Mammary epithelial cell (primary cell): ENCODE measurements at regions of chr3 and their contacts with region 1.

Region 1: GRCh38 chr3:49469936-49470713 is at the start of gene DAG1:
- DNase-seq: peak; percentile 97
- H3K4me3 ChIP-seq: peak within 1 kb of the TSS; percentile 62 to 98 (median 86)
- H3K27ac ChIP-seq: peak within 1 kb of the TSS; percentile 81
- H3K4me1 ChIP-seq: peaks cover 29% of the 10 kb centered on the region
- H3K27me3 ChIP-seq: no peaks in the 10 kb centered on the region
- CTCF ChIP-seq: no peak
- total RNA-seq, gene DAG1: 68.9 to 162 TPM

Region 2: GRCh38 chr3:49428697-49429100 is 41.4 kb before region 1 on chr3:
- CTCF ChIA-PET with region 1: no interaction called
- dilution Hi-C with region 1: loop called (anchors 5 kb)
- in situ Hi-C with region 1: no loop called
- intact Hi-C with region 1: no loop called
- DNase-seq: no peak
- H3K4me3 ChIP-seq: peak overlapping the region; percentile 74 to 79 (median 76)
- H3K27ac ChIP-seq: no peak overlapping the region
- H3K4me1 ChIP-seq: peaks cover 6% of the 10 kb centered on the region
- H3K27me3 ChIP-seq: no peaks in the 10 kb centered on the region
- CTCF ChIP-seq: no peak

Region 3: GRCh38 chr3:49500732-49501609 is 30.8 kb after region 1 on chr3:
- CTCF ChIA-PET with region 1: no interaction called
- dilution Hi-C with region 1: no loop called
- in situ Hi-C with region 1: no loop called
- intact Hi-C with region 1: loop called (anchors 2 kb)
- DNase-seq: peak; percentile 95
- H3K4me3 ChIP-seq: peak overlapping the region in 1 of 3 experiments; percentile 6
- H3K27ac ChIP-seq: peak overlapping the region; percentile 82
- H3K4me1 ChIP-seq: peaks cover 29% of the 10 kb centered on the region
- H3K27me3 ChIP-seq: no peaks in the 10 kb centered on the region
- CTCF ChIP-seq: no peak

Region 4: DNA sequence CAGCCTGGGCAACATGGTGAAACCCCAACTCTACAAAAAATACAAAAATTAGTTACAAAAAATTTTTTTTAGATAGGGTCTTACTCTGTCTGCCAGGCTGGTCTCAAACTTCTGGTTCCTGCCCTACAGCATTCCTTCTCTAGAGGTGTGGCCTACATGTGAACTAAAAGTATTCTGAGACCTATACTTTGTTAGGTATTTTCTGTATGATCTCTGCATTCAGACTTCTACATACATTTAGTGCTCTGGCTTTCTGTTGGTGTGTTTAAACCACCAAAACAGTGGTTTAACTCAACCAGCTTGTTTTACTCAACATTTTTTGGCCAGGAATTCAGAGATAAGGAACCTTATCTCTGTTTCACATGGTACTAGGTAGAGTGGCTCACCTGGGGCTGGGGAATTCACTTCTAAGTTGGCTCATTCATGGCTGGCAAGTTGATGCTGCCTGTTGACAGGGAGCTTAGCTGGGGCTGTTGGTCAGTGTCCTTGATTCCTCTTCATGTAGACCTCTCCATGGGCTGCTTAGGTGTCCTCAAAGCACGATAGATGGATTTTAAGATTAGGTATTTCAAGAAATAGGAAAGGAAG is 42.7 kb after region 1 on chr3:
- CTCF ChIA-PET with region 1: no interaction called
- dilution Hi-C with region 1: loop called (anchors 5 kb)
- in situ Hi-C with region 1: no loop called
- intact Hi-C with region 1: no loop called
- DNase-seq: no peak
- H3K4me3 ChIP-seq: no peak overlapping the region
- H3K27ac ChIP-seq: no peak overlapping the region
- H3K4me1 ChIP-seq: no peaks in the 10 kb centered on the region
- H3K27me3 ChIP-seq: no peaks in the 10 kb centered on the region
- CTCF ChIP-seq: no peak

Region 5: GRCh38 chr3:49519296-49519695 is 49.2 kb after region 1 on chr3:
- CTCF ChIA-PET with region 1: no interaction called
- dilution Hi-C with region 1: loop called (anchors 5 kb)
- in situ Hi-C with region 1: no loop called
- intact Hi-C with region 1: loop called (anchors 5 kb)
- DNase-seq: peak; percentile 19
- H3K4me3 ChIP-seq: no peak overlapping the region
- H3K27ac ChIP-seq: no peak overlapping the region
- H3K4me1 ChIP-seq: peaks cover 33% of the 10 kb centered on the region
- H3K27me3 ChIP-seq: no peaks in the 10 kb centered on the region
- CTCF ChIP-seq: no peak

Region 6: GRCh38 chr3:49554633-49555265 is 84.6 kb after region 1 on chr3:
- CTCF ChIA-PET with region 1: no interaction called
- dilution Hi-C with region 1: loop called (anchors 5 kb)
- in situ Hi-C with region 1: no loop called
- intact Hi-C with region 1: no loop called
- DNase-seq: peak; percentile 28
- H3K4me3 ChIP-seq: peak overlapping the region in 2 of 3 experiments; percentile 50 to 58
- H3K27ac ChIP-seq: no peak overlapping the region
- H3K4me1 ChIP-seq: no peaks in the 10 kb centered on the region
- H3K27me3 ChIP-seq: no peaks in the 10 kb centered on the region
- CTCF ChIP-seq: no peak